ENCODE measurements at regions of chr4 and their contacts with region 1.

Region 1: GRCh38 chr4:158624889-158625478 is 46.7 kb downstream of the C4orf46 start:
- DNase-seq: no peak
- ATAC-seq: peak; percentile 90 to 96 (median 93)
- H3K4me3 ChIP-seq: no peak overlapping the region
- H3K27ac ChIP-seq: no peak overlapping the region
- H3K4me1 ChIP-seq: no peaks in the 10 kb centered on the region
- H3K27me3 ChIP-seq: no peaks in the 10 kb centered on the region
- CTCF ChIP-seq: peak; percentile 68 to 84 (median 75)
- POLR2A ChIP-seq: no peak

Region 2: GRCh38 chr4:158253350-158253980 is 371.5 kb before region 1 on chr4:
- intact Hi-C with region 1: loop called (anchors 10 kb)
- DNase-seq: peak in 1 of 3 donors; percentile 53
- ATAC-seq: peak; percentile 83 to 88 (median 86)
- H3K4me3 ChIP-seq: no peak overlapping the region
- H3K27ac ChIP-seq: no peak overlapping the region
- H3K4me1 ChIP-seq: no peaks in the 10 kb centered on the region
- H3K27me3 ChIP-seq: no peaks in the 10 kb centered on the region
- CTCF ChIP-seq: peak; percentile 64 to 70 (median 66)
- POLR2A ChIP-seq: no peak

Region 3: GRCh38 chr4:158810487-158811215 is 185.7 kb after region 1 on chr4:
- intact Hi-C with region 1: no loop called
- DNase-seq: peak in 1 of 3 donors; percentile 25
- ATAC-seq: peak in 3 of 4 donors; percentile 3 to 41 (median 3)
- H3K4me3 ChIP-seq: no peak overlapping the region
- H3K27ac ChIP-seq: peak overlapping the region; percentile 0 to 62 (median 44)
- H3K4me1 ChIP-seq: peaks cover 0 to 69% (median 17%) of the 10 kb centered on the region in 4 donors
- H3K27me3 ChIP-seq: no peaks in the 10 kb centered on the region
- CTCF ChIP-seq: no peak
- POLR2A ChIP-seq: peak; percentile 4

Region 4: GRCh38 chr4:159102622-159103383 is 477.8 kb after region 1 on chr4 and contains the start of gene RAPGEF2:
- intact Hi-C with region 1: no loop called
- DNase-seq: peak; percentile 96 to 97 (median 96)
- ATAC-seq: peak; percentile 88 to 95 (median 92)
- H3K4me3 ChIP-seq: peak within 1 kb of the TSS; percentile 88 to 91 (median 89)
- H3K27ac ChIP-seq: peak within 1 kb of the TSS; percentile 94 to 97 (median 94)
- H3K4me1 ChIP-seq: peaks cover 0 to 21% (median 9%) of the 10 kb centered on the region in 4 donors
- H3K27me3 ChIP-seq: no peaks in the 10 kb centered on the region
- CTCF ChIP-seq: no peak
- POLR2A ChIP-seq: peak; percentile 94
- total RNA-seq, gene RAPGEF2: 22.1 to 32.1 (median 27.2) TPM